Activated T-helper 2 cell treated with anti-CD3 and anti-CD28 coated beads, Interferon-gamma antibody, Interleukin-2, Interleukin-4, amounts not matched to agents 10 μg/mL and 5 μg/mL and 100 μg/mL, durations not matched to agents 14 hours and 24 hours and 36 hours (primary cell): ENCODE measurements at regions of chr1 and their contacts with region 1.

Region 1: DNA sequence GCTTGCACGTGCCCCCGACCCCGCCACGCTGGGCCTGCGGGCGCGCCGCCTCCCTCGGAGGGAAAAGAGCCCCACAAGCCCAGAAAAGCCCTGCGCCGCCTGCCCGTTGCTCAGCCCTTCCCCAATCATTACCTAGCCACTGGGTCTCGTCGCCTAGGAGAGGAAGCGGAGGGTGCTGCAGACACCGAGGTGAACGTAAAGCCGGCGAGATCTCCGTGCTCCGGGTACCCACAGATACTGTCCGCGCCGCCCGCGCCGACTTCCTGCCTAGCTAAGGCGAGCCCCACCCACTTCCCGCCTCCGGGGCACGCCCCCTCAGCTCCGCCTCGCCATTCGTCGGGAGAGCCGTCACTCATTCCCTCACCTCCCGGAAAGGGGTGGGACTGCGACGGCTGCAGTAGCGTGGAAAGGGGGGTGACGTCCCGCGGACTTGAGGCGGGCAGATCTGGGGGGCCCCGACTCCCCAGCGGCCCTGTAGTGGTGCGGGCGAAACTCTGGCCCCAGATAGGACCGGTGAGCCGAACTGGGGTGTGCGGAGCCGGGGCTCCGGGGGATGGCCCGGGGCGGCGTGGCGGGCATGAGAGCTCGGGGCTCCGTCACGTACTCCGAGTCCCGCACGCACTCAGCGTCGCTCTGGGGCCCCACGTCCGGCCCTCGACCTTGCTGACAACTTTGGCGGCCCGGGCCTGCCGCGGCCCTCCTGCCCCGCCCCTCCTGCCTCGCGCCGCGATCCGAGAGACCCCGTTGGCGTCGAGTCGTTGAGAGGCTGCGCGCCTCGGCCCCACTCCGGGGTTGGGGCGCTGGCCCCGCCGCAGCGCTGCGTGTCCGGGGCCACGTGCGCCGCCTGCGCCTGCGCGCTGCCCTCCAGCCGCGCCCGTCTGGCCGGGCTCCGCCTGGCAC is at the start of gene ENO1:
- DNase-seq: peak; percentile 100
- H3K4me3 Mint-ChIP-seq: peak within 1 kb of the TSS; percentile 98
- H3K27ac Mint-ChIP-seq: peak within 1 kb of the TSS; percentile 100
- H3K4me1 Mint-ChIP-seq: peaks cover 29% of the 10 kb centered on the region
- H3K27me3 Mint-ChIP-seq: no peaks in the 10 kb centered on the region
- total RNA-seq, gene ENO1: 3,630 and 3,637 TPM in 2 replicates

Region 2: DNA sequence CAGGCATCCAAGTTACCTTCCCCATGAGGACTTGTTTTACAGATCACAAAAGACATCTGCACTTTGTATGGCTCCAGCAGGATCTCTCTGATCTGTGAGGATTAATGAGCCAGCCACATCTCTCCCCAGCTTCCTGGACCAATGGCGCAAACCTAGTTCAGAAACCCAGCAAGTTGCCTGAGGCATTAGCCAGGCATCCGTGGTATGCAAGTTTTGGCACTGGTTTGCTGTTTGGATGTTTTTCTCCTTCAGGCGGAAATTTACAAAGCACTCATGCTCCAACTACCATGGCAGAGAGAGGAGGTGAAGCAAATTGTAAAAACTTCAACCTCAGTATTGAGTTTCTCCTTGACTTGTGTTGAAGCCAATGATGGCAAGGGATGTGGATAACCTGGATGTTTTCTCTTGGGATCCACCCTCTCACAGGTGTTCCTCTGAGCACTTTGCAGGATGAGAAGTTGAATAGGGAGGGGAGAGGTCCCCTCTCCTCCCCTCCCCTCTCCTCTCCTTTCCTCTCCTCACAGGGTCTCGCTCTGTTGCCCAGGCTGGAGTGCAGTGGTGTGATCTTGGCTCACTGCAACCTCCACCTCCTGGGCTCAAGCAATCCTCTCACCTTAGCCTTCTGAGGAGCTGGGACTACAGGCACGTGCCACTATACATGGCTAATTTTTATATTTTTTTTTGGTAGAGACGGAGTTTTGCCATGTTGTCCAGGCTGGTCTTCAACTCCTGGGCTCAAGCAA is 25.4 kb after region 1 on chr1:
- intact Hi-C with region 1: loop called (anchors 1 kb)
- DNase-seq: no peak
- H3K4me3 Mint-ChIP-seq: no peak overlapping the region
- H3K27ac Mint-ChIP-seq: no peak overlapping the region
- H3K4me1 Mint-ChIP-seq: peaks cover 41% of the 10 kb centered on the region
- H3K27me3 Mint-ChIP-seq: no peaks in the 10 kb centered on the region

Region 3: GRCh38 chr1:8941906-8942305 is 63.2 kb after region 1 on chr1:
- intact Hi-C with region 1: no loop called
- DNase-seq: no peak
- H3K4me3 Mint-ChIP-seq: no peak overlapping the region
- H3K27ac Mint-ChIP-seq: peak overlapping the region; percentile 55
- H3K4me1 Mint-ChIP-seq: peaks cover 69% of the 10 kb centered on the region
- H3K27me3 Mint-ChIP-seq: no peaks in the 10 kb centered on the region